Mammary epithelial cell (primary cell): ENCODE measurements at regions of chrX and their contacts with region 1.

Region 1: GRCh38 chrX:108224727-108225621 is 133.4 kb downstream of the ATG4A start:
- DNase-seq: peak; percentile 57
- H3K4me3 ChIP-seq: no peak overlapping the region
- H3K27ac ChIP-seq: peak overlapping the region; percentile 16
- H3K4me1 ChIP-seq: peaks cover 8% of the 10 kb centered on the region
- H3K27me3 ChIP-seq: no peaks in the 10 kb centered on the region
- CTCF ChIP-seq: peak; percentile 67 to 78

Region 2: DNA sequence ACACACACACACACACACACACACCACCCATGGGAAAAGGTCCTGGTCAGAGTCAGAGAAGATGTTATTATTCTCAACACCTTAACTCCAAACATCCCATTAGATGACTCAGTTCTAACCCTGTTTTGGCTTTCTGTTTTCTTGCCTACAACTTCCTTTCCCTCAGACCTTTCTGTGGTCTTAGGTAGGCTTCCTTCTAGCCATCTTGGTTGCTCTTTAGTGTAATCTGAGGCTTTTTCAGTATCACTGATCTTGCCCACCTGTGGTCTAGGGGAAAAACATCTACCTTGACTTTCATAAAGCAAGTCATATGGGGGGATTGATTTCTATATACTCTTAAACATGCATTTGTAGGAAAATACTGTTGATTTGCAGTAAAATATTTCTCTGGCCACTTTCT is 76.5 kb before region 1 on chrX:
- CTCF ChIA-PET with region 1: no interaction called
- dilution Hi-C with region 1: no loop called
- in situ Hi-C with region 1: no loop called
- intact Hi-C with region 1: no loop called
- DNase-seq: no peak
- H3K4me3 ChIP-seq: no peak overlapping the region
- H3K27ac ChIP-seq: no peak overlapping the region
- H3K4me1 ChIP-seq: no peaks in the 10 kb centered on the region
- H3K27me3 ChIP-seq: peaks cover 4% of the 10 kb centered on the region
- CTCF ChIP-seq: no peak

Region 3: DNA sequence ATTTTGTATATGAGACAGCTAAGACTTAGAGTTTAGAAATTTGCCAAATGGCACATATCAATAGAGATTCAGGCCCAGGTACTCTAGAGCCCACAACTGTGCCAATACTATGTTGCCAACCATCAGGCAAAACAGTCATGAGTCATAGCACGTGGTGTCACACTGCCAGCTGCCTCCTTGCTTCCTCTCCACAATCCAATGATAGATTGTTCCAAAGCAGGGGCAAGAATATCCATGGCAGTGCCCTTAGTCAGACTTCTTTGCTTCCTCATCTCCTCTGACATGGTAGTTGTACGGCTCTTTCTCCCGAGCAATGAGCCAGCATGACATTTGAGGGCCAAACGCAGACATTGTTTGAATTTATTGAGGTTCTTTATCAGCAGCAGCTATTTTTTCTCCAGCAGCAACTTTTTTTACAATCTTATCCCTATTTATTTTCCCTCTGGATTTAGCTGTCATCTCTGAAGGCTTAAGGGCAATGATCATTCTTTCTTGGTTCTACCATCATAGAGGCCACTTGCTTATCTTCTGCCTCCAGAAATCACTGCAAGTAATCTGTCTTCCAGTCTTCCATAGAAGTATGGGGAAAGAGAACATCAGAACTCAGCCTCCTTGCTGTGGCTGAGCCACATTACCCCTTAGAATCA is 43.6 kb after region 1 on chrX:
- CTCF ChIA-PET with region 1: no interaction called
- dilution Hi-C with region 1: loop called (anchors 5 kb)
- in situ Hi-C with region 1: no loop called
- intact Hi-C with region 1: no loop called
- DNase-seq: peak; percentile 54
- H3K4me3 ChIP-seq: no peak overlapping the region
- H3K27ac ChIP-seq: no peak overlapping the region
- H3K4me1 ChIP-seq: peaks cover 41% of the 10 kb centered on the region
- H3K27me3 ChIP-seq: no peaks in the 10 kb centered on the region
- CTCF ChIP-seq: no peak

Region 4: DNA sequence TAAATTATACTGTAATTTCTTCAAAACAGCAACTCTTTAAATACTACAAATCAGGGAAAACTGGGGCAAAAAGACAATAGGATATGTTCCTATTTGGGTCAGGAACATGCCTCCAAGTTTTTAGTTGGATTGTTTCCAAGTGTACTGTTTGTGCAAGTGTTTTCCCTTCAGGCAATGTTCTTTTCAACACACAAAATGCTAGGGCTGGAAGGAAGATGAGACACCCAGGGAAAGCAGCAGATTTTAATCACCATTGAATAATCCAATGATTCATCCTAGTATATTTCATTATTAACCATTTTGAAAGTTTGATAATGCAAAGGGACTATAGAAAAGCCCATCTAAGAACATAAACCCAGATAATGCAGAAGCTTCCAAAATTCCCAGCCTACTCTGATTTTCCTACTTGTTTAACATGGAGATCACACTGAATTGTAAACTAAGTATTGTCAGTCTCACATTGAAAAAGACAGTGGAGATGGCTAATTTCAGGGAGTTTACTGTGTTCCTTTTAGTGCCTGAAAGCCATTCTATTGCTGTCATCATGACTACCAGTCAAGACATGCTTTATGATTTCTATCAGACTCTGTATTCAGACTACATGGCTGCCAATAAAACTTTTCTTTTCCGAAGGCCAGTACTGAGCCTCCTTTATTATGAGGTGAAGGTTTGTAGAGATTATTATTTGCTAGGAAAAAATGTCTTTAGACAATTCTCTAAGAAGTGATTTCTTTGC is 174.6 kb after region 1 on chrX:
- CTCF ChIA-PET with region 1: no interaction called
- dilution Hi-C with region 1: no loop called
- in situ Hi-C with region 1: no loop called
- intact Hi-C with region 1: loop called (anchors 2 kb)
- DNase-seq: peak; percentile 86
- H3K4me3 ChIP-seq: peak overlapping the region in 2 of 3 experiments; percentile 13 to 39
- H3K27ac ChIP-seq: peak overlapping the region; percentile 99
- H3K4me1 ChIP-seq: peaks cover 60% of the 10 kb centered on the region
- H3K27me3 ChIP-seq: no peaks in the 10 kb centered on the region
- CTCF ChIP-seq: no peak

Region 5: GRCh38 chrX:108527724-108528123 is 302.8 kb after region 1 on chrX:
- CTCF ChIA-PET with region 1: no interaction called
- dilution Hi-C with region 1: no loop called
- in situ Hi-C with region 1: loop called in 1 of 2 experiments (anchors 10 kb)
- intact Hi-C with region 1: no loop called
- DNase-seq: no peak
- H3K4me3 ChIP-seq: no peak overlapping the region
- H3K27ac ChIP-seq: no peak overlapping the region
- H3K4me1 ChIP-seq: no peaks in the 10 kb centered on the region
- H3K27me3 ChIP-seq: no peaks in the 10 kb centered on the region
- CTCF ChIP-seq: no peak